Activated CD4-positive, alpha-beta memory T cell treated with anti-CD3 and anti-CD28 coated beads, Interleukin-2, amount 10 ng/mL, durations not matched to agents 7 days and 5 days (primary cell): ENCODE measurements at regions of chr15 and their contacts with region 1.

Region 1: DNA sequence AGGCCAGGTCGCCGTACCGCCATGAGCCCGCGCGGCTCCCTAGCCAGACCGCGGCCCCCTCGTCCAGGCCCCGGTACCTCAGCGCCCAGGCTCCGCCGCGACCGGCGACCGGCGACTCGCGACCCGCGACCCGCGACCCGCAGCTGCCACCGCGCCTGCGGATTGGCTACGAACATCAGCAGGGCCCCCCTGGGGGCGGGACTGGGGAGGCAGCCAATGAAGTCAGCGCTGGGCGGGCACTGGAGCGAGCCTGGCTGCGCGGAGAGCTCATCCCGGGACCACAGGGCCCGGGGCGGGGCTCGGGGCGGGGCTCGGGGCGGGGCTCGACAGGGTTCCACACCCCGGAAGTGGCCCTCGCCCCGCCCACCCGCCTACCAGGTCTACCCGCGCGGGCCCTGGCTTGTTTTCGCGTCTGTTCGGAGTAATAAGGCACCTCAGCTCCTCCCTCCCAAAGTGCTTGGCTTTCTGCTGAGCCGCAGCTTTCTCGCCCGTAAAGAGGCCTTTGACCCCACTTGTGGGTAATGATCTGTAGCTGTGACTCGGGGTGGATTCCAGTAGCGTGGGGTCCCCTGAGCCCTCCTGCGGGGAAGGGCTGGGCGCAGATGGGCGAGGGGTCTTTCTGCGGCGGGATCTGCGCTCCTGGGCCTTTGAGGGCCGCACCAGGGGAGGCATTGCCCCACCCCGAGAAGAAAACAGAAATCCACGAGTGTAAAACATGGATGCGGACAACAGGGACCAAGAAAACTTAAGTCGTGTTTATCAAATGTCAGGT is at the start of gene LYSMD4:
- DNase-seq: peak; percentile 99
- H3K4me3 Mint-ChIP-seq: peak within 1 kb of the TSS; percentile 73
- H3K27ac Mint-ChIP-seq: peak within 1 kb of the TSS; percentile 85
- H3K4me1 Mint-ChIP-seq: peaks cover 22% of the 10 kb centered on the region
- H3K27me3 Mint-ChIP-seq: no peaks in the 10 kb centered on the region
- total RNA-seq, gene LYSMD4: 10.7 to 10.9 TPM

Region 2: GRCh38 chr15:99250494-99251435 is 482.7 kb before region 1 on chr15:
- CTCF ChIA-PET with region 1: no interaction called
- POLR2A ChIA-PET with region 1: interaction called, 14 read pairs
- DNase-seq: peak; percentile 98
- H3K4me3 Mint-ChIP-seq: peak overlapping the region; percentile 85
- H3K27ac Mint-ChIP-seq: peak overlapping the region; percentile 74
- H3K4me1 Mint-ChIP-seq: peaks cover 28% of the 10 kb centered on the region
- H3K27me3 Mint-ChIP-seq: no peaks in the 10 kb centered on the region

Region 3: GRCh38 chr15:99275525-99276128 is 457.8 kb before region 1 on chr15:
- CTCF ChIA-PET with region 1: interaction called, 25 read pairs
- POLR2A ChIA-PET with region 1: no interaction called
- DNase-seq: no peak
- H3K4me3 Mint-ChIP-seq: no peak overlapping the region
- H3K27ac Mint-ChIP-seq: no peak overlapping the region
- H3K4me1 Mint-ChIP-seq: peaks cover 22% of the 10 kb centered on the region
- H3K27me3 Mint-ChIP-seq: no peaks in the 10 kb centered on the region

Region 4: GRCh38 chr15:99565299-99566156 is 167.9 kb before region 1 on chr15 and contains the start of gene MEF2A:
- CTCF ChIA-PET with region 1: interaction called, 3 read pairs
- POLR2A ChIA-PET with region 1: interaction called, 10 read pairs
- DNase-seq: peak; percentile 91
- H3K4me3 Mint-ChIP-seq: peak within 1 kb of the TSS; percentile 97
- H3K27ac Mint-ChIP-seq: peak within 1 kb of the TSS; percentile 91
- H3K4me1 Mint-ChIP-seq: peaks cover 26% of the 10 kb centered on the region
- H3K27me3 Mint-ChIP-seq: peaks cover 15% of the 10 kb centered on the region
- total RNA-seq, gene MEF2A: 24.6 to 24.8 TPM

Region 5: GRCh38 chr15:99719096-99719541 is 14.3 kb before region 1 on chr15:
- CTCF ChIA-PET with region 1: interaction called, 3 read pairs
- POLR2A ChIA-PET with region 1: interaction called, 21 read pairs
- DNase-seq: no peak
- H3K4me3 Mint-ChIP-seq: no peak overlapping the region
- H3K27ac Mint-ChIP-seq: no peak overlapping the region
- H3K4me1 Mint-ChIP-seq: peaks cover 34% of the 10 kb centered on the region
- H3K27me3 Mint-ChIP-seq: no peaks in the 10 kb centered on the region

Region 6: GRCh38 chr15:99755692-99756409 is 22.4 kb after region 1 on chr15:
- CTCF ChIA-PET with region 1: interaction called, 24 read pairs
- POLR2A ChIA-PET with region 1: interaction called, 3 read pairs
- DNase-seq: peak; percentile 37
- H3K4me3 Mint-ChIP-seq: no peak overlapping the region
- H3K27ac Mint-ChIP-seq: no peak overlapping the region
- H3K4me1 Mint-ChIP-seq: no peaks in the 10 kb centered on the region
- H3K27me3 Mint-ChIP-seq: peaks cover 3% of the 10 kb centered on the region

Region 7: DNA sequence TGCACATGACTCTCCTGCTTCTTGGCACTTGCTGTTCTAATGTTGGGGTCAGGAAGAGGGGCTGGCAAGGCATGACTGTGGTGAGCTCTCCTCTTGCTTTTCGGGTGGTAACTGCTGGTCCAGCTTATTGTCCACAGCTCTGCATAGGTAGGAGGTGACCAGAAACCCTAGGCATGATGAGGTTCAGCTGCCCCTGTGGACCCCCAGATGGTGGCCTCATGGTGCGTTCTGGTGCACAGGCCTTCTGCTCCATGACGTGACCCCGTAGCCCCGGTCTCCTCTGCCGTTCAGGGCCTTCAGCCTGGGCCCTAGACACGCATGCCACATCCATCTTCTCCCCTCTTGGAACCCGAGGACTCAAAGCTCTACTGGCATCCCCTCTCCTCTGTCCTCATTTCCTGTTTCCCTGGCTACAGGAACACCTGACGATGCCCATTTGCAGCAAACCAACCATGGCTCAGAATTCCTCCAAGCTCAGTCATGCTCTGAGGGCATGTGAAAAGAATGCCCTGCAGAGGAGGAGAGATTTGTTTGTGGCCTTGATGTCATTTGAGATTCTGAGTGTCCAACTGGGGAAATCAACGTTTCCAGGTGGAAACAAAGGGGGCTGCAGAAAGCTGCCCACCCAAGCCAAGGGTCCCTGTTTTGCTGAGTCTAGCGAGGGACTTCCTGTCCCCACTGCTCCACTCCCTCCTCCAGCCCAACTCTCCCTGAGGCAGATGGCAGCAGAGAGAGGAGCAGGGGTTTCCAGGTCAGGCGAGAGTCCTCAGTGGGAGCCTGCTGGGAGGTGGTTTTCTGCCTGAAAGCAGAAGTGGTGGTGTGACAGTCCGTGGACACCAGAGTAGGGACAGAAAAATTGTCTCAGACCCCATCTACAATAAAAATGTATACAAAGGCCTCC is 198.5 kb after region 1 on chr15:
- CTCF ChIA-PET with region 1: no interaction called
- POLR2A ChIA-PET with region 1: no interaction called
- DNase-seq: no peak
- H3K4me3 Mint-ChIP-seq: no peak overlapping the region
- H3K27ac Mint-ChIP-seq: no peak overlapping the region
- H3K4me1 Mint-ChIP-seq: peaks cover 7% of the 10 kb centered on the region
- H3K27me3 Mint-ChIP-seq: peaks cover 8% of the 10 kb centered on the region